AG04450 (cell line): ENCODE measurements at regions of chr2 and their contacts with region 1.

Region 1: GRCh38 chr2:17646081-17646554 is 105.6 kb downstream of the VSNL1 start:
- DNase-seq: peak; percentile 72
- H3K4me3 ChIP-seq: no peak overlapping the region
- H3K27ac ChIP-seq: no peak overlapping the region
- H3K27me3 ChIP-seq: no peaks in the 10 kb centered on the region
- CTCF ChIP-seq: peak; percentile 84

Region 2: DNA sequence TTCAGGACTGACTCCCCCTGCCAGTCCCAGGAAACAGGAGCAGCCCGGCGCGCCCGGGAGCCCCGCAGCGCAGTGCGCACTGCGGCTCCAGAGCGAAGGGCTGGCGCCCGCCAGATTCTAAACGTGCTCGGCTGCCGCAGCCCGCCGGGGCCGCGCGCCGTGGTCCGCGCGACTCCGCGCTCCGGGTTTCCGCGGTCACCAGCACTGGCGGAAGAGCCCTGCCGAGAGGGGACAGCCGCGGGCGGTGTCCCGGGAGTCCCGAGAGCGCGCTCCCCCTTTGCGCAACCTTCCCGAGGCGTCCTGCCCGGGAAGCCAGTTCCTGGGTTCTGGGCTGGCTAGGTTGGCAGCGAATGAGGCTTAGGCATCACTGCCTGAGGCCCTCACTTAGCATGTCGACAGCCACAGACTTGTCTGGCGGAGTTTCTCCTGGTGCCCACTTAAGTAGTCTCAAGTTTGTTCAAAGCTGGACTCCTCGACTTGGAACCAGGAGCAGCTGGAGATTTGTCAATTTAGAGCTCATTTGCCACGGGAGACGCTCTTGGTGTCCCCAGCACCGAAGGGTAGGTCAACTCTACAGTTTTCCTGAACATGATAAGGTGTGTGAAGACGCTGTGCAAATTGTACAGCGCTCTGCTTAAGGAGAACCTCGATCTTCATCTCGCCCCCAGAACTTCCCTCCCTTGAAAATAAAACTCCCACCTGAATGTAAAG is 107.1 kb before region 1 on chr2:
- CTCF ChIA-PET with region 1: interaction called, 11 read pairs
- POLR2A ChIA-PET with region 1: interaction called, 4 read pairs
- DNase-seq: no peak
- H3K4me3 ChIP-seq: peak overlapping the region; percentile 65
- H3K27ac ChIP-seq: no peak overlapping the region
- H3K27me3 ChIP-seq: peaks cover 17% of the 10 kb centered on the region
- CTCF ChIP-seq: no peak

Region 3: DNA sequence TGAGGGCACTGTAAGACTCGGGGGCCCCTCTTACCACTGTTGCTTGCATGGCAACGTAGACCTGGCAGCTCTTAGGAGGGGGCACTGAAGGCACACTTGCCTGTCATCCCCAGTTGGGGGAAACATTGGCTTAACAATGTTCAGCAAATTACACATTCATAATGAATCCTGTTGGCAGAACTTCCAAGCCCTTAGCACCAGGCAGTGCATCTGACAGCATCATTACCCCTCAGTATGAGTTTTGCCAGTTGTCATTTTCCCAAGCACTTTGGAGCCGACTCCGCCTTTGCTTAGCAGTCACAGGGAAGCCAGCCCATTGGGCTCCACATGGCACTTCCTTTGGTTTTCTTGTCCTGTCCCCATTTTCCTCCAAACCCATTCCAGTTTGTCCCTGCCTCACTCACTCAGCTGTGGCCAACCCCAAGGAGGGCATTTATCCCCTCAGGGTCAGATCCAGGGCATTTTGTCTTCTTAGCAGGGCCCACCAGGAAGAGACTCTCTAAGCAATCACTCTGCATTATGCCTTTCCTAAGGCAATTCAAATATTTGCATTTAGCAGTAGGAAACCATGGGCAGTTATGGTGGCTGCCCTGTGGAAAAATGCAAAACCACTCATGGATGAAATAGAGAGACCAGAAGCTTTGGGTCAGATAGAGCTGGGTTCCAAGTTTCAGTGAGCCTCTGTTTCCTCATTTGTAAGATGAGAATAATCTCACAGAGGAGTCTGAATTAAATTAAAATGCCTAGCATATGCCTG is 31.8 kb before region 1 on chr2:
- CTCF ChIA-PET with region 1: interaction called, 10 read pairs
- POLR2A ChIA-PET with region 1: no interaction called
- DNase-seq: no peak
- H3K4me3 ChIP-seq: no peak overlapping the region
- H3K27ac ChIP-seq: no peak overlapping the region
- H3K27me3 ChIP-seq: no peaks in the 10 kb centered on the region
- CTCF ChIP-seq: no peak

Region 4: DNA sequence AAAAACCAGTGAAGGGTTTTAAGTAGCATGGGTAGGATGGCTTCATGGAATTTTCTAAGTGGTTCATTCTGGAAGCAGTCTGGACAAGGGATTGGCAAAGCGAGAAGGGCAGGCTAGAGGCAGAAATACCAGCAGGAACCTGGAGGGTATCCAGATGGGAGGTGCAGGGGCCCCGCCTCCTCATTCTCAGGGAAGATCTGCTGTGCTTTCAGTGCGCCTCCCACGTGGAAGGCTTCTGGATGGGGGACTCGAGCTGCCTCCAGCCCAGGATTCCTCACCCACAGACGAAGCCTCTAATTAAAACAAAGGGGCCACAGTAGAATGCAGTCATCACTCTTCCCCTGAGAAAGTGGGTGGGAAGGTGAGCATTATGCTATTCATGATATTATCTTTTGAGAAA is 25.8 kb before region 1 on chr2:
- CTCF ChIA-PET with region 1: interaction called, 20 read pairs
- POLR2A ChIA-PET with region 1: no interaction called
- DNase-seq: no peak
- H3K4me3 ChIP-seq: no peak overlapping the region
- H3K27ac ChIP-seq: no peak overlapping the region
- H3K27me3 ChIP-seq: no peaks in the 10 kb centered on the region
- CTCF ChIP-seq: no peak

Region 5: GRCh38 chr2:17628349-17629261 is 17.5 kb before region 1 on chr2:
- CTCF ChIA-PET with region 1: interaction called, 20 read pairs
- POLR2A ChIA-PET with region 1: interaction called, 4 read pairs
- DNase-seq: no peak
- H3K4me3 ChIP-seq: no peak overlapping the region
- H3K27ac ChIP-seq: no peak overlapping the region
- H3K27me3 ChIP-seq: no peaks in the 10 kb centered on the region
- CTCF ChIP-seq: no peak

Region 6: GRCh38 chr2:17658251-17658843 is 12.2 kb after region 1 on chr2:
- CTCF ChIA-PET with region 1: interaction called, 21 read pairs
- POLR2A ChIA-PET with region 1: no interaction called
- DNase-seq: no peak
- H3K4me3 ChIP-seq: no peak overlapping the region
- H3K27ac ChIP-seq: no peak overlapping the region
- H3K27me3 ChIP-seq: no peaks in the 10 kb centered on the region
- CTCF ChIP-seq: no peak